Activated CD4-positive, alpha-beta T cell treated with anti-CD3 and anti-CD28 coated beads, Interleukin-2, amount 10 ng/mL, durations not matched to agents 24 days and 14 days (primary cell): ENCODE measurements at regions of chr7 and their contacts with region 1.

Region 1: DNA sequence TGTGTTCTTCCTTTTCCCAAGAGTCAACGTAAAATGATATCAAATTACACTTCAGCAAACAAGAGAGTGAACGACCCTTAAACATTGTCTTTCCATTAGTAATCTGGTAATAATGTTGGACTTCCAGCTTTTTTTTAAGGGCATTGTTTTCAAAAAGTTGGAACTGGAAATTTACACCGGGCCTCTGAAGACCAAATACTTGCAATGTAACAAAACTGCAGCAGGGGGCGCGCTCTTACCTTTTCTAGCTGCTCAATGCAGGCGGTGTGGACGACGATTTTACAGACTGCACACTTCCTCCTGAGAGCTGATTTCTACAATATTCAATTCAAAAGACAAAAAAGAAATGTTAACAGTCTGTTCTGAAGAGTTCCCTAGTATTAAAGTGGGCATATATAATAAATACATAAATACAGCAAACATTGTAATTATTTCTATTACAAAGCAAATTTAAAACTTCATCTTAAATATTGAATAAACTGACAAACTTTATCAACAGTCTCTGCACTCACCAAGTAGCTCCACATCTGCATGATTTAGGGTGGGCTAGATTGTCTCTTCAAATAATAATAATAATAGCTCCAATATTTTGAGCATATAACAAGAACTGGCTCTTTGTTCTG is 190.4 kb downstream of the DGKI start:
- DNase-seq: peak; percentile 89
- H3K4me3 Mint-ChIP-seq: no peak overlapping the region
- H3K27ac Mint-ChIP-seq: no peak overlapping the region
- H3K4me1 Mint-ChIP-seq: no peaks in the 10 kb centered on the region
- H3K27me3 Mint-ChIP-seq: peaks cover 4% of the 10 kb centered on the region

Region 2: DNA sequence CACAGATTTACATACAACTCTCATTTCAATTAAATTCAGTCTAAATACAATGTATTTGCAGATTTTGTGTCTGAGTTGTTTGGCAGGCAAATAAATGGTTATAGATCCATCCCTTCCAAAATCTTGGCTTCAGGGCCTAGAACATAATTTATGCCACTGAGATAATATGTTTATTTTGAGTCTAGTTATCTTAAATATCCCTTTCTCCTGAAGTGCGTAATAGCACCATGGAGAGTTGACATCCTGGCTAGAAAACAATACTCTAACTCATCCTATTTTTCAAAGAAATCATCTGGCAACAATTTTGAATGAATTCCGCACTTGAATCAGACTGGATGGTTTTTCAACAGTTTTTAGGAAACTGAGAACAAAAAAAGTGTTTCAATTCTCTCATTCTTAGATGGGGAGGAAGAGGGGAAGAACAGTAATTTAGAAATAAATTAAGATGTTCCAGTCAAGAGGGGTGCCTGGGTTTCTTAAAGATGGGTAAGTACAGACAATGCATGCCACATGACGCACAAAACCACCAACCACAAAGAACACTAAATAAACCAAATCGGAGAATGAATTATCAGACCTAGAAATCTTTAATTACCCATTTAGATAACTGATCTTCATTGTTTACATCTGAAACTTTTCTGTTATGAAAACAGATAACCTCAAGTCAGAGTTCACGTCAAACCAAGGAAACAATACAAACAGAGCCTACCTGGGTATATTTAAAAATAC is 84.1 kb before region 1 on chr7:
- intact Hi-C with region 1: no loop called
- DNase-seq: no peak
- H3K4me3 Mint-ChIP-seq: no peak overlapping the region
- H3K27ac Mint-ChIP-seq: no peak overlapping the region
- H3K4me1 Mint-ChIP-seq: no peaks in the 10 kb centered on the region
- H3K27me3 Mint-ChIP-seq: no peaks in the 10 kb centered on the region

Region 3: DNA sequence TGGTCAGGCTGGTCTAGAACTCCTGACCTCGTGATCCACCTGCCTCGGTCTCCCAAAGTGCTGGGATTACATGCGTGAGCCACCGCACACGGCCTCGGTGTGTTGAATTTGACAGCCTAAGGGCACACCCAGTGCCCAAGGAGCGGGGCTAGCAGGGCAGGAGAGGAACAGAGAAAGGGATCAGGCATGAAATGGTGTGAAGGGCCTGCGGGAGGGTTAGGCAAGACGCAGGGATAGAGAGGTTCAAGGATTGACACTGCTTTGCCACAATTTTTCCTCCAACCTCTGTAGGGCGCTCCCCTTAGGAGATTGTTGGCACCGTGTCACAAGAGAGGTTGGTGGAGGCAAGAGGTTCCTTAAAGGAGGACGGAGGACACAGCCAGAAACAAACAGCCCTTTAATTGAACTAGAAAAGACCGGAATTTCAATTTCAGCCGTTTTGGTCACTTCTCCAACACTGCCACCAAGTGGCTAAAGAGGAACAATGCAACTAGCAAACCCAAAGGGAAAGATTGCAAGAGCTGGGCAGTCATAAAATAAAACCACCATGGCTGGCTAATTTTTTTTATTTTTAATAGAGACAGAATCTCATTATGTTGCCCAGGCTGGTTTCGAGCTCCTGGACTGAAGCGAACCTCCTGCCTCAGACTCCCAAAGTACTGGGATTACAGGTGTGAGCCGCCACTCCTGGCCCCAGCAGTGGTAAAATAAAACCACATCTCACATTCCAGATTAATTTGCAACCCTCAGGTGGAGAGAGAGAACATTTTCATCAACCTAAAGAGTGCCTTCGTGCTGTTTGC is 352.4 kb after region 1 on chr7:
- intact Hi-C with region 1: loop called (anchors 2 kb)
- DNase-seq: peak; percentile 83
- H3K4me3 Mint-ChIP-seq: no peak overlapping the region
- H3K27ac Mint-ChIP-seq: peak overlapping the region; percentile 42
- H3K4me1 Mint-ChIP-seq: peaks cover 6% of the 10 kb centered on the region
- H3K27me3 Mint-ChIP-seq: peaks cover 7% of the 10 kb centered on the region